Breast epithelium (tissue), 4 donors: ENCODE measurements at regions of chr13 and their contacts with region 1.

Region 1: GRCh38 chr13:32938907-32939306 is 77.3 kb upstream of the KL start:
- DNase-seq: no peak
- H3K4me3 ChIP-seq: no peak overlapping the region
- H3K27ac ChIP-seq: no peak overlapping the region
- H3K4me1 ChIP-seq: no peaks in the 10 kb centered on the region
- H3K27me3 ChIP-seq: no peaks in the 10 kb centered on the region
- CTCF ChIP-seq: no peak
- POLR2A ChIP-seq: no peak

Region 2: GRCh38 chr13:32001185-32001768 is 937.6 kb before region 1 on chr13:
- intact Hi-C with region 1: no loop called
- DNase-seq: no peak
- H3K4me3 ChIP-seq: no peak overlapping the region
- H3K27ac ChIP-seq: no peak overlapping the region
- H3K4me1 ChIP-seq: no peaks in the 10 kb centered on the region
- H3K27me3 ChIP-seq: no peaks in the 10 kb centered on the region
- CTCF ChIP-seq: peak; percentile 39 to 57 (median 48)
- POLR2A ChIP-seq: no peak

Region 3: DNA sequence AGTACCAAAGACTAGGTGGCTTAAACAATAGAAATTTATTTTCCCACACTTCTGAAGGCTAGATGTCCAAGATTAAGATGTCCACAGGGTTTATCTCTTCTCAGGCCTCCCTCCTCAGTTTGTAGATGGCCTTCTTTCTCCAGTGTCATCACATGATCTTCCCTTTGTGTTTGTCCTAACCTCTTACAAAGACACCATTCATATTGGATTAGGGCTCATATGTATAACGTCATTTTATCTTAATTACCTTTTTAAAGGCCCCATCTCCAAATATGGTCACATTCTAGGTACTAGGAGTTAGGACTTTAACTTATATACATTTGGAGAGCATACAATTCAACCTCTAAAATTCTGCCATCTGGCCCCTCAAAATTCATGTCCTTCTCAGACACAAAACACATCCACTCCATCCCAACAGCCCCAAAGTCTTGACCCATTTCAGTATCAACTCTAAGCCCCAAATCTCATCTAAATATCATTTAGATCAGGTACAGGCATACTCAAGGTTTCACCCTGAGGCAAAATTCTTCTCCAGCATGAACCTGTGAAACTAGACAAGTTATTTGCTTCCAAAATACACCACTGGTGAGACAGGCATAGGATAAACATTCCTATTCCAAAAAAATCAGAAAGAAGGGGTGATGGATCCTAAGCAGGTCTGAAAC is 434.5 kb before region 1 on chr13:
- intact Hi-C with region 1: no loop called
- DNase-seq: no peak
- H3K4me3 ChIP-seq: no peak overlapping the region
- H3K27ac ChIP-seq: peak overlapping the region in 1 of 2 donors; percentile 42
- H3K4me1 ChIP-seq: no peaks in the 10 kb centered on the region
- H3K27me3 ChIP-seq: no peaks in the 10 kb centered on the region
- CTCF ChIP-seq: no peak
- POLR2A ChIP-seq: no peak

Region 4: GRCh38 chr13:32969516-32969941 is 30.6 kb after region 1 on chr13:
- intact Hi-C with region 1: loop called (anchors 1 kb)
- DNase-seq: no peak
- H3K4me3 ChIP-seq: peak overlapping the region; percentile 5 to 47 (median 22)
- H3K27ac ChIP-seq: peak overlapping the region; percentile 61 to 77
- H3K4me1 ChIP-seq: no peaks in the 10 kb centered on the region
- H3K27me3 ChIP-seq: no peaks in the 10 kb centered on the region
- CTCF ChIP-seq: no peak
- POLR2A ChIP-seq: no peak